ENCODE measurements at regions of chr10 and their contacts with region 1.

Region 1: DNA sequence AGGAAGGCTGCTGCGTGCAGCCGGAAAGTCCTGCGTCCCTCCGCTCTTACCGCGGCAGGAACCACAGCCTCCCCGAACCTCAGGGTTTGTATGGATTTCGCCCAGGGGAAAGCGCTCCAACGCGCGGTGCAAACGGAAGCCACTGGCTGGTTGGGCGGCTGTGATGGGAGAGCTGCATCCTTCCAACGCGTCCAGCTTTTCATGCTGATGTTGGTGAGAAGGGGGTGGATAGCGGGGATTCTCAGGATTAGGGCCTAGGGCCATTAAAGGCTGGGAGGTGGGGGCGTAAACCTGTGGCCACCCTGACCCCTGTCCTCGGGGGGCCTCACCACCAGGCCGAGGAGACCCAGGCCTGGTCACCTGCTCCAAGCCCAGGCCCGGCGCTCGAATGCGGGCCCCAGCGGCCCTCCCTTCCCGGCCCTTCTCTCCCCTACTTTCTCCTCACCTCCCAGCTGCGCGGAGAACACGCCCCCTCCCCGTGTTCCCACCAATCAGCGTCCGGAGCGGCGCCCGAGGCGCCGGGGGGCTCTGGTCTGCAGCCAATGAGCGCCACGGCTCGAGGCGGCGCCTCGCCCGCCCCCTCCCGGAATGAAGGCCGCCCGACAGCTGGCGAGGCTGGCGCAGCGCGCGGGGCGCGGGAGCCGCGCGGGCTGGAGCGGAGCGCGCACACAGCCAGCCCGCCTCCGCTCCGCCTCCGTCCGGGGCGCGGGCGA is 458 bp upstream of the NANOS1 start:
- DNase-seq: peak; percentile 95
- H3K4me3 ChIP-seq: peak overlapping the region; percentile 72 to 84 (median 76)
- H3K27ac ChIP-seq: peak overlapping the region; percentile 86 to 92 (median 88)
- H3K4me1 ChIP-seq: peaks cover 40 to 82% (median 56%) of the 10 kb centered on the region in 4 donors
- H3K27me3 ChIP-seq: no peaks in the 10 kb centered on the region
- CTCF ChIP-seq: peak; percentile 18 to 34 (median 22)
- EP300 ChIP-seq: no peak
- POLR2A ChIP-seq: no peak

Region 2: DNA sequence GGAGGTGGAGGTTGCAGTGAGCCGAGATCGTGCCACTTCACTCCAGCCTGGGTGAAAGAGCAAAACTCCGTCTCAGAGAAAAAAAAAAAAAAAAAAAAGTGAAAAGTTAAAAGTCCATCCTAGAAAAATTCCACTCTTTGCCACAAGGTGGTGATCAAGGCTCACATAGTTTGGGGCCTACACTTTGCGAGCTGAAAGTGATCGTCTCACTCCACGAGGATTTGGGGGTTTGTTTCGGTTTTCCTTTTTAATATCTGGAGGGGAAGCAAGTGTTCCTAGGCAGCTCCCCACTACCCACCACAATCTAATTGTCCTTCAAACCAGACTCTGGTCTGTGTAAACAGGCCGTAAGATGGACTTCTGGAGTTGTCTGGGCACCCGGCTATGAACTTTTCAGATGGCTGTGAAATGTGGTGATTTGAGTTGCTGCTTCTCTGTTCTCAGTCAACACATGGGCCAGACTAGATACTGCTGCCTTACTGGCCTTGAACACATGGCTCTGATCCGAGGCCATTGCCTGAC is 460.7 kb before region 1 on chr10:
- intact Hi-C with region 1: loop called (anchors 10 kb)
- DNase-seq: peak; percentile 70
- H3K4me3 ChIP-seq: peak overlapping the region in 3 of 4 donors; percentile 19 to 33 (median 28)
- H3K27ac ChIP-seq: peak overlapping the region in 2 of 4 donors; percentile 13 to 17
- H3K4me1 ChIP-seq: peaks cover 16 to 62% (median 58%) of the 10 kb centered on the region in 4 donors
- H3K27me3 ChIP-seq: no peaks in the 10 kb centered on the region
- CTCF ChIP-seq: peak; percentile 84 to 90 (median 86)
- EP300 ChIP-seq: no peak
- POLR2A ChIP-seq: no peak

Region 3: DNA sequence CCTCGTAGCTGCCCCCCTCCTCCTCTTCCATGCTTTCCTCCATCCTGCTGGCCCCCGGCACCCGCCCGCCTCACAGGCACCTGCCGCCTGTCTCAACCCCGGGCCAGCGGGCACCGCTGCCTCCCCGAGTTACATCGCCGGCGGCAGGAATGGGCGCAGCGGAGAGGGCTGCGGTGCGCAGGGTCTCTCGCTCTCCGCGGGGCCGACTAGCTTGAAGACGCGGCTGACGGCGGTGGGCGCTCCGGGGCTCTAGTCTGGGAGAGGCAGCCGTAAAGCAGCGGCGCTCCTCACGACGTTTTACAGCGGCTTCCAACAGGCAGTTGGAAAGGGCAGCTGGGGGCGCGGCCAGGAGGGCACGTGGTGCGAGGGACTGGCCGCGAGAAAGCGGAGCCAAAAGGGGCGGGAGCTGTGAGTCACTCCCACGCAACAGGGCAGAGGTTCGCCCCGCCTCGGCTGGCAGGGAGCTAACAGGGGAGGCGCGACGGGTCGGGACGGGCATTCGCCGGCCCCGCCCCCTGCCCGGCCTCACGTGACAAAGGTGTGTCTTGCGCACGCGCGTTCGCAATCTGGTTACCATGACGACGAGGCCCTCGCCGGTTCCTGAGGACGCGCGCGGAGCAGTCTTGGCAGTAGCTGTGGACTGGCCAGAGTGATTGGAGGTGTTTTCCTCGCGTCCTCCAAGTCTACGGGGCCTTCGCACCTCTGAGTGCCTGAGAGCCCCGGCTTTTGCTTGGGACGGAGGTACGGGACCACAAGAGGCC is 274.2 kb before region 1 on chr10 and contains the start of gene CACUL1:
- intact Hi-C with region 1: loop called (anchors 10 kb)
- DNase-seq: peak; percentile 100
- H3K4me3 ChIP-seq: peak within 1 kb of the TSS; percentile 90 to 100 (median 95)
- H3K27ac ChIP-seq: peak within 1 kb of the TSS; percentile 87 to 96 (median 92)
- H3K4me1 ChIP-seq: peaks cover 20 to 47% (median 40%) of the 10 kb centered on the region in 4 donors
- H3K27me3 ChIP-seq: no peaks in the 10 kb centered on the region
- CTCF ChIP-seq: no peak
- EP300 ChIP-seq: no peak
- POLR2A ChIP-seq: peak; percentile 47
- total RNA-seq, gene CACUL1: 30.8 to 44.4 (median 33.3) TPM

Region 4: GRCh38 chr10:118960157-118961090 is 68.6 kb before region 1 on chr10:
- intact Hi-C with region 1: loop called (anchors 10 kb)
- DNase-seq: no peak
- H3K4me3 ChIP-seq: no peak overlapping the region
- H3K27ac ChIP-seq: peak overlapping the region; percentile 25 to 40 (median 32)
- H3K4me1 ChIP-seq: peaks cover 22 to 37% (median 29%) of the 10 kb centered on the region in 4 donors
- H3K27me3 ChIP-seq: no peaks in the 10 kb centered on the region
- CTCF ChIP-seq: no peak
- EP300 ChIP-seq: no peak
- POLR2A ChIP-seq: no peak

Region 5: GRCh38 chr10:119005362-119006043 is 23.6 kb before region 1 on chr10:
- intact Hi-C with region 1: no loop called
- DNase-seq: no peak
- H3K4me3 ChIP-seq: no peak overlapping the region
- H3K27ac ChIP-seq: no peak overlapping the region
- H3K4me1 ChIP-seq: peaks cover 10 to 29% (median 25%) of the 10 kb centered on the region in 4 donors
- H3K27me3 ChIP-seq: no peaks in the 10 kb centered on the region
- CTCF ChIP-seq: no peak
- EP300 ChIP-seq: no peak
- POLR2A ChIP-seq: no peak

Region 6: DNA sequence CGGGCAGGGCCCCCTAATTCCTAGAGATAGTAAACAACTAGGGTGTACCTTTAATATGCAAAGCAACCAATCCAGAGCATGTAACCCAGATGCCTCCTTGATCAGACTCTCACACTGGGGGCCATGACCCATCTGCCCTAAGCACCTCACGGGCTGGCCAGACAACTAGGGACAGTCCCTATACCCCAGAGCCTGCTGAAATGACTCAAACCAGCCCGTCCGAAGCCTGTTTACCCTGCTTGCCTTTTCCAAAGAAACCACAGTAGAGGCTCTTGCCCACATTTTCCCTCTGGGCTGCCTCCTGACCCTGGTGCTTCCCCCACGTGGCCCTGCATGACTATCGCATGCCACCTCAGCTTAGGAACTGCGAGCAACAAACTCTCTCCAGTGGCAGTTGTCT is 467.2 kb after region 1 on chr10:
- intact Hi-C with region 1: no loop called
- DNase-seq: no peak
- H3K4me3 ChIP-seq: no peak overlapping the region
- H3K27ac ChIP-seq: no peak overlapping the region
- H3K4me1 ChIP-seq: peaks cover 0 to 40% (median 30%) of the 10 kb centered on the region in 4 donors
- H3K27me3 ChIP-seq: no peaks in the 10 kb centered on the region
- CTCF ChIP-seq: no peak
- EP300 ChIP-seq: no peak
- POLR2A ChIP-seq: no peak

Measured in esophagus muscularis mucosa (tissue), 4 donors.